ENCODE measurements at regions of chr2 and their contacts with region 1.

Region 1: DNA sequence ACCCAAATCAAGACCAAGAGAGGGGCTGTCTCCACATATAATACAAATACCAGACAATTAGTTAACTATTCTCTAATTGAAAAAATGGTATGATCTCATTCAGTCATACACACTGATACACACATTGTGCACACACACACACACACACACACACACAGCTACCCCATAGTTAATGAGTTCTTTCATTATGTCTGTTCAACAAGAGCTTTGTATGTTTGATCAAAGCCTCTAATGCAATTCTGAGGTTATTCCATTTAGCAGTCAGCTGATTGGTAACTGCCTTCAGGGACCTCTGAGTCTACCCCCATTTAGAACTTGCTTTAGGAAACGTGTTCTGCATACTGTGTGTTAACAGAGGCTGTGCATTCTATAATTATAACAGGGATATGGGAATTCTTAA is 741.4 kb upstream of the LRRTM4 start:
- DNase-seq: no peak
- ATAC-seq: no peak
- H3K4me3 Mint-ChIP-seq: no peak overlapping the region
- H3K27ac Mint-ChIP-seq: no peak overlapping the region
- H3K4me1 Mint-ChIP-seq: no peaks in the 10 kb centered on the region
- H3K27me3 Mint-ChIP-seq: no peaks in the 10 kb centered on the region
- CTCF ChIP-seq: no peak

Region 2: GRCh38 chr2:78218066-78218465 is 45.5 kb before region 1 on chr2:
- CTCF ChIA-PET with region 1: no interaction called
- POLR2A ChIA-PET with region 1: no interaction called
- intact Hi-C with region 1: loop called (anchors 1 kb)
- DNase-seq: no peak
- ATAC-seq: no peak
- H3K4me3 Mint-ChIP-seq: no peak overlapping the region
- H3K27ac Mint-ChIP-seq: no peak overlapping the region
- H3K4me1 Mint-ChIP-seq: no peaks in the 10 kb centered on the region
- H3K27me3 Mint-ChIP-seq: no peaks in the 10 kb centered on the region
- CTCF ChIP-seq: no peak

Region 3: GRCh38 chr2:78601112-78601511 is 337.5 kb after region 1 on chr2:
- CTCF ChIA-PET with region 1: no interaction called
- POLR2A ChIA-PET with region 1: no interaction called
- intact Hi-C with region 1: no loop called
- DNase-seq: no peak
- ATAC-seq: no peak
- H3K4me3 Mint-ChIP-seq: no peak overlapping the region
- H3K27ac Mint-ChIP-seq: no peak overlapping the region
- H3K4me1 Mint-ChIP-seq: no peaks in the 10 kb centered on the region
- H3K27me3 Mint-ChIP-seq: no peaks in the 10 kb centered on the region
- CTCF ChIP-seq: no peak